PC-9 (cell line): ENCODE measurements at regions of chr12 and their contacts with region 1.

Region 1: DNA sequence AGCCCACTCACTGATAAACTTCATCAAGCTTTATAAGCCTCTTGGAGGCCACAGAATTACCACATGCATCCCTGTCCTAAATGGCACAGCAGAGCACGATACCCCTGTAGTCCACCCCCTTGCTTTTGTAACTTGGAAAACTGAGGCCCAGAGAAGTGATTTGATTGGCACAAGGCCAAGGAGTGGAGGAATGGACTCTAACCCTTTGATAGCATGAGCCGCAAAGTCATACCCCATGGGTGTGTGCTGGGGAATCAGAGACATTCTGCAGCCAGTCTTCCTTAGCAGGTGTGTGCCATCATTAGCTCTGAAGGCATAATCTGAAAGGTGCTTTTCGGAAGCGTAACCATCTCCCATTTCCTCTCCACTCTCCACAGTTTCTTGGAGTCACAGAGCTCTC is 28.5 kb upstream of the PWP1 start:
- DNase-seq: no peak
- H3K4me3 ChIP-seq: no peak overlapping the region
- H3K27ac ChIP-seq: no peak overlapping the region
- H3K4me1 ChIP-seq: no peaks in the 10 kb centered on the region
- H3K27me3 ChIP-seq: no peaks in the 10 kb centered on the region
- CTCF ChIP-seq: no peak

Region 2: GRCh38 chr12:107670999-107671643 is 14.0 kb after region 1 on chr12:
- CTCF ChIA-PET with region 1: interaction called, 20 read pairs
- POLR2A ChIA-PET with region 1: no interaction called
- intact Hi-C with region 1: no loop called
- DNase-seq: no peak
- H3K4me3 ChIP-seq: no peak overlapping the region
- H3K27ac ChIP-seq: no peak overlapping the region
- H3K4me1 ChIP-seq: no peaks in the 10 kb centered on the region; the same call in 1 of the 2 replicates
- H3K27me3 ChIP-seq: peaks cover 11% of the 10 kb centered on the region; the same call in 1 of the 2 replicates
- CTCF ChIP-seq: peak; percentile 69